BJ (cell line): ENCODE measurements at regions of chr13 and their contacts with region 1.

Region 1: DNA sequence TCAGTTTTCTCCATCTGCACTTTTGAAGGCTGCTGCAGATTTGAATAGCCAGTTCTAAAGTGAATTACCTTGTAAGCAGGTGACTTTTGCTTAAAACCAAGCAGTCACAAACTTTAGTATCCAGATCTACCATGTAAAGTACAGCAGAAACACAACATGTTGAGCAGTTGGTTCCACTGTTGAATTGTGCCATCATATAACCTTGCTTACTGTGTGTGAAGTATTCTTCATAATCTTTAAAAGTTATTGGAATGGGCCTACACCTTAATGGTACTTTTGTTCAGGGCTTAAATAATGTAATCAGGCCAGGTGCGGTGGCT is 23.2 kb upstream of the MTUS2 start:
- DNase-seq: no peak
- H3K4me3 ChIP-seq: no peak overlapping the region
- H3K27me3 ChIP-seq: no peaks in the 10 kb centered on the region; the same call in 1 of the 2 replicates
- CTCF ChIP-seq: no peak

Region 2: GRCh38 chr13:28679628-28680027 is 117.3 kb before region 1 on chr13:
- CTCF ChIA-PET with region 1: interaction called, 102 read pairs
- POLR2A ChIA-PET with region 1: no interaction called
- DNase-seq: no peak
- H3K4me3 ChIP-seq: no peak overlapping the region
- H3K27me3 ChIP-seq: no peaks in the 10 kb centered on the region
- CTCF ChIP-seq: peak; percentile 34; the same call in 1 of the 2 replicates

Region 3: DNA sequence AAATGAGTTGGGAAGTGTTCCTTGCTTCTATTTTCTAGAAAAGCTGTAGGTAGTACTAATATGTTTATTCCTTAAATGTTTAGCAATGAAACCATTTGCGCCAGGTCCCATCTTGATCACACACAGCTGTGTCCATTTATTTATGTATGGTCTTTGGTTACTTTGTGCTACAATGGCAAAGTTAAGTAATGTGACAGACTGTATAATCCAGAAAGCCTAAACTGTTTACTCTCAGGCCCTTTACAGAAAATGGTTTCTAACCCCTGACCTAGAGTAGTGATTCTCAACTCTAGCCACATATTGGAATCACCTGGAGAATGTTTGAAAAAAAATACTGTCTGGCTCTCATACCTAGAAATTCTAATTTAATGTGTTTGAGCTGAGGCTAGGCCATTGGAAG is 99.5 kb before region 1 on chr13:
- CTCF ChIA-PET with region 1: interaction called, 10 read pairs
- POLR2A ChIA-PET with region 1: no interaction called
- DNase-seq: no peak
- H3K4me3 ChIP-seq: no peak overlapping the region
- H3K27me3 ChIP-seq: no peaks in the 10 kb centered on the region
- CTCF ChIP-seq: no peak